Activated T-helper 2 cell treated with anti-CD3 and anti-CD28 coated beads, Interferon-gamma antibody, Interleukin-2, Interleukin-4, amounts not matched to agents 10 μg/mL and 5 μg/mL and 100 μg/mL, durations not matched to agents 14 hours and 24 hours and 36 hours (primary cell): ENCODE measurements at regions of chr7 and their contacts with region 1.

Region 1: DNA sequence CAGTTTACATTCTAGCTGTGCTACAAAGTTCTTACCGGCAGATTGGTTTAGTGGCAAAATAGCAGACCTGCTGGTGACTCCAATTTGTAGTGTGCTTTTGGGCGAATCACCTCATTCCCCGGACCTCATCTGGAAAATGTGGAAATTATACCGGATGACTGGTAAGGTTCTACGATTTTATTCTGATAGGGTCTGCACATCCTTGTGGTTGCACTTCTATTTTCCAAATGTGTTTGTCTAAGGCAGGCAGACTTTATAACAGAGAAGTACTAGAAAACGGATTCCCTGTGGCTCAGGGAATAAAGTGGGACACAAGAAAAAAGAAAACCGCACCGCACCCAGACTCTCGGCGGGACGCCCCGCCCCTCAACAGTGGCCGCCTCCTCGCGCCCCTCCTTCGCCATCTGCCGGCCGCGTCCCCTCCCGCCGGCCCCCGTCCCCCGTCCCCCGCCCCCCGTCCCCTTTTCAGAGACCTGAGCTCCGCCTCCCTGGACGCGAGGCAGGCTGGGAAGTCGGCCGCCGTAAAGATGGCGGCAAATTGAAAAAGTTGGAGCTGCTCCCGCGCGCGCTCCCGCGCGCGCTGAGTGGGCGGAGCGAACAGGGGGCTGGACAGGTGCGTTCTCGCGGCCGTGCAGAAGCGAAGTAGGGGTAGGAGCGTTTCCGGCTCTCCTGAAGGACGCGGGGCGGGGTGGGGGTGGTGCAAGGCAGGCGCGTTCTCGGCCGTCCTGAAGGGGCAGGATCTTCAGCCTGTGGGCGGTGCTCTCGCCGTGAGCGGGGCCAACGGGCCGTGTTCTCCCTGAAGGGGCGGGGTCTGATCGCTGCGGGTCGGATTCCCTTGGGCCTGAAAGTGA is 531 bp upstream of the CCM2 start:
- DNase-seq: peak; percentile 100
- H3K4me3 Mint-ChIP-seq: peak overlapping the region; percentile 86
- H3K27ac Mint-ChIP-seq: peak overlapping the region; percentile 93
- H3K4me1 Mint-ChIP-seq: peaks cover 50% of the 10 kb centered on the region
- H3K27me3 Mint-ChIP-seq: no peaks in the 10 kb centered on the region

Region 2: DNA sequence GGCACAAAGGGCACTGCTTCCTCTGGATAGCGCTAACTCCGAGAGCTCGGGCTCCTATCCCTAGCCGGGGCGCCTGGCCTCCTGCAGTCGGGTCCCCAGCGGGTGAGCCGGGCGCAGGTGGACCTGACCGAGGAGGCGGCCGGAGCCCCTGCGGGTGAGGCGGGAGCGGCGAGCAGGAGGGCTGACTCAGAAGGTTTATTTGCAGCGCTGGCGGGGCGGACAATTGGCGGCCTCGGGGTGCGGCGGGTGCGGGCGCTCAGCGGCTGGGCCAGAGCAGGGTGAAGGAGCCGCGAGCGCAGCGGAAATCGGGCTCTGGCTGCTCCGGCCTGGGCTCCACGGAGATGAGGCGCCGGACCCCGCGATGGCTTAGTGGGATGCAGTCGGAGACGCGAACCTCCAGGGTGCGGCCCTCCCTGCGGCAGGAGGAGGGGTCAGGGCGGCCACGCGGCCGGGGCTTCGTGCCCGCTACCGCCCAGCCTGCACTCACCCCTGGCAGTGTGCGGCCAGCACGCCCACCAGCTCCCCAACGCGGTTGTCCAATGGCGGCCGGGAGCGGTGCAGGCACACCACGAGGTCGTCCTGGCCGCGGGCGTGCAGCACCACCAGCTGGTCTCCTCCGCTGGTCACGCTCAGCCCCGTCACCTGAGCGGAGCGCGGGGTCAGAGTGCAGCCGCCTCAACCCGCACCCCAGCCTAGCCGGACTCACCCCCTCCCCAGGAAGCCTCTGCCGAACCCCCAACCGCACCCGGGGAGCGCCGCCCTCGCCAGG is 36.8 kb before region 1 on chr7:
- intact Hi-C with region 1: no loop called
- DNase-seq: no peak
- H3K4me3 Mint-ChIP-seq: no peak overlapping the region
- H3K27ac Mint-ChIP-seq: no peak overlapping the region
- H3K4me1 Mint-ChIP-seq: peaks cover 13% of the 10 kb centered on the region
- H3K27me3 Mint-ChIP-seq: no peaks in the 10 kb centered on the region

Region 3: DNA sequence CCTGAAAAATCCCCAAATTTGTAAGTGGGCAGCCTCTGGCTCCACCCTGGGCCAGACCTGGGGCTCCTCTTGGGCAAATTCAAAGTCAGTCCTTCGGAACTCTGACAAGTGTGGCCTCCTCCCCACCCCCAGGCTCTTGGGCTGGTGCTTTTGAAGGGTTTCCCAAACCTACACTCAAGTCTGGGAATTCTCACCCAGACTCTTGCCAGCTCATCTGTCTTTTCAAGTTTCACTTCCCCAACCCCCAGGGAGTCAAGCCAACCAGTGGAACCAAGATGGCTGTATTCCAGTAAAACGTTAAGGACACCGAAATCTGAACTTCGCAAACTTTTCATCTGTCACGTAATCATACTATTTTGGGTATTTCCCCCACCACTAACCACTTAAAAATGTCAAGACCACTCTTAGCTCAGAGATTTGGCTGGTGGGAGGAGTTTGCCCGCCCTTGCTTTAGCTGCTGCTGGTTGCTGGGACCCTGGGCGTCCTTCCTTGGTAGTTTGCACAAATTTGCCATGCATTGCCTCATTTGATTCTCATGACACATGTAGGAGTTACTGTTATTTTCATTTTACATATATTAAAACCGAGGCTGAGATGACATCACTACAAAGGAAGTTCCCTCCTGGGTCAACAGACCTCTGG is 19.0 kb before region 1 on chr7:
- intact Hi-C with region 1: loop called (anchors 1 kb)
- DNase-seq: peak; percentile 56
- H3K4me3 Mint-ChIP-seq: peak overlapping the region; percentile 97
- H3K27ac Mint-ChIP-seq: peak overlapping the region; percentile 98
- H3K4me1 Mint-ChIP-seq: peaks cover 63% of the 10 kb centered on the region
- H3K27me3 Mint-ChIP-seq: no peaks in the 10 kb centered on the region

Region 4: GRCh38 chr7:44986218-44987053 is 13.0 kb before region 1 on chr7:
- intact Hi-C with region 1: loop called (anchors 1 kb)
- DNase-seq: peak; percentile 95
- H3K4me3 Mint-ChIP-seq: peak overlapping the region; percentile 95
- H3K27ac Mint-ChIP-seq: peak overlapping the region; percentile 99
- H3K4me1 Mint-ChIP-seq: peaks cover 62% of the 10 kb centered on the region
- H3K27me3 Mint-ChIP-seq: no peaks in the 10 kb centered on the region

Region 5: GRCh38 chr7:45033261-45033930 is 33.9 kb after region 1 on chr7:
- intact Hi-C with region 1: loop called (anchors 2 kb)
- DNase-seq: no peak
- H3K4me3 Mint-ChIP-seq: peak overlapping the region; percentile 7
- H3K27ac Mint-ChIP-seq: peak overlapping the region; percentile 74
- H3K4me1 Mint-ChIP-seq: peaks cover 70% of the 10 kb centered on the region
- H3K27me3 Mint-ChIP-seq: no peaks in the 10 kb centered on the region

Region 6: DNA sequence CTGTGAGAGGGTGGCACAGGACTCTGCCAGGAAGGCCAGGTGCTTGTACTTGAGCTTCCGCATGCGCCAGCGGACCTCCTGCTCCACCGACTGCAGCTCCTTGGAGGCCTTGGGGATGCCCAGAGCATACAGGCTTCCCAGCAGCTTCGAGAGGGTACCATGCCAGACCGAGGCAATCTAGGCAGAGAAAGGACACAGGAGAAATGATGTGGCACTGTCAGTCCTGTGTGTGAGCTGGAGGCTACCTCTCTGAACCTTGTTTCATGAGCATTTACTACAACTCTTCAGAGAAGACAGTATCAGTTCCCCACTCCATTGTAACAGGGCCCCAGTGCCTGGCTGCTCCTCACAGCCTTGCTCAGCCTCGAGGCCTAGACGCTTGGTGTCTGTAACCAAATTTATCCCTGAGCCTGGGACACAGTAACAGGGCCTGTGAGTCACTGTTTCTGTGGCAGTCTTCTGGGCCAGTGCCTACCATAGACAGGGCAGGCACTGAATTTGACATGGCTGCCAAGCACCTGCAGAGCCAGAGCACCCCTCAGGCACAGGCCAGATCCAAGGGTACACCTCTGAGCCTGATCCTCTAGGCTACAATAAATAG is 106.2 kb after region 1 on chr7:
- intact Hi-C with region 1: no loop called
- DNase-seq: no peak
- H3K4me3 Mint-ChIP-seq: no peak overlapping the region
- H3K27ac Mint-ChIP-seq: no peak overlapping the region
- H3K4me1 Mint-ChIP-seq: peaks cover 22% of the 10 kb centered on the region
- H3K27me3 Mint-ChIP-seq: no peaks in the 10 kb centered on the region